Activated naive CD4-positive, alpha-beta T cell treated with anti-CD3 and anti-CD28 coated beads for 36 hours (primary cell): ENCODE measurements at regions of chr12 and their contacts with region 1.

Region 1: GRCh38 chr12:14365294-14366208 is at the start of gene ATF7IP:
- DNase-seq: peak; percentile 98
- H3K4me3 Mint-ChIP-seq: peak within 1 kb of the TSS; percentile 85
- H3K27ac Mint-ChIP-seq: peak within 1 kb of the TSS; percentile 98
- H3K4me1 Mint-ChIP-seq: peaks cover 38% of the 10 kb centered on the region
- H3K27me3 Mint-ChIP-seq: no peaks in the 10 kb centered on the region
- total RNA-seq, gene ATF7IP: 131 to 141 TPM

Region 2: DNA sequence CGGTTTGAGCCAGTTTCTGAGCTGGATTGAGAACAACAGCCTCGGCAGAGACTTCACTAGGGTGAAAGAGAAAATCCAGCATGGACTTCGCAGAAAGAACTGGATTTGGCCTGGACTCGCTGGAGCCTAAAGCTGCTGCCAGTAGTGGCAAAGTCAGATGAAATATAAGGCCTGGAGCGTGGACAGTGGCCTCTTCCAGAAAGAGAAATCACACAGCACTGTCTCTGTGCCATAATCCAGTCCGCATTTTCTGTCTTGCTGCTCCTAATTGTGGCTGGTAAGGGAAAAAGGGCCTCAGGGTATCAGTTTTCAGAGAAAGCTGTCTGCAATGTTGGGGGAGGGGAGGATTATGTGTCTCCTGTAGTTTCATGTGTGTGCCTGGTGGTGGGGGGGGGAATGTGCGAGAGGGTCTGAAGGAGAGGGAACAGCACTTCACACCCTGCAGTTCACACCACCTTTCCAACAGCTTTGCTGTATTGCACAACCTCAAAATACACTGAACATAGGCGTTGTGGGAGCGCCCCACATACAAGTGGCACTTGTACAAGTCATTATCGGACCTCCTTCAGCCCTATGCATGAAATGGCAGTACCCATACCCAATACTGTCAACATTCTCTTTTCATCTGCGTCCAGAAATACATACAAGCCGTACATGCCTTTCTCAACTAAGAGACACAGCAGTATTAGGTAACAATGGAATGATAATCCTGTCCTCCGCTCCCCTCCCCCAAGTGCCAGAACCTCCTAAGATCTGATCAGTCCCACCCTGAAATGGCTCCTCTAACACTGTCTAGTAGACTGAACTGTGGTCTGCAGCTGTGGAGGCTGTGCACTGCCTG is 107.6 kb before region 1 on chr12:
- CTCF ChIA-PET with region 1: interaction called, 8 read pairs
- intact Hi-C with region 1: loop called (anchors 1 kb)
- DNase-seq: peak; percentile 99
- H3K4me3 Mint-ChIP-seq: peak overlapping the region; percentile 73
- H3K27ac Mint-ChIP-seq: peak overlapping the region; percentile 98
- H3K4me1 Mint-ChIP-seq: peaks cover 53% of the 10 kb centered on the region
- H3K27me3 Mint-ChIP-seq: no peaks in the 10 kb centered on the region

Region 3: DNA sequence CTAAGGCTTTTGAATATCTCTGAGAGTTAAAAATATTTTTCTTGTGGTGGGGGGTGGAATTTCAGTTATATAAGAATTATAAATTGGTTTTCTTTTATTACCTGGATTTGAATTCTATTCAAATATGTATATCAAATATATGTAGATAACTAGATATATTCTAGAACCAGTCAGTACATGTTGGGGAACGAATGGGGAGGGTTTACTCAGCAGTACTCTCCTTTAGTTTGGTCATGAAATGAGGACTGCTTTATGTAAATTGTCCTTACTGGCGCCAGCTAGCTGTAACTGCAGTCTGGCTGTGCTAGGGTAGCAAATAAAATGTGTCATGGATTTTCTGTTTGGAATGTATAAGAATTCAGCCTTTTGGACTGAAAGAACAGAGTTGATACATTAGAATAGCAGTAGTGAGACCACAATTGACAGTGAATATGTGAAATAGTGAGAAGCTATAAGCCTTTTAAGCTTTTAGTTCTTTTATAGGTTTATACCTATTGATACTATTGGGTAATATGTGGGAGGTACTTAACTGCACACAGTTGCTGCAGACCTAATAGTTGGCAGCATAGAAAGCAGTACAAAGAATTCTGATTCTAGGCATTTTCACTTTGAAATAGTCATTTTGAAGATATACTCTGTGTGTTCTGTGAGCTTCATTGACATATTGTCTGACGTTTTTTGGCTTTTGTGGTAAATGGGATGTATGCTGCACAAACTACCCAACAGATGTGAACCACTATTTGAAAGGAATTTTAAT is 28.9 kb after region 1 on chr12:
- CTCF ChIA-PET with region 1: interaction called, 11 read pairs
- intact Hi-C with region 1: loop called (anchors 1 kb)
- DNase-seq: peak; percentile 62
- H3K4me3 Mint-ChIP-seq: peak overlapping the region; percentile 77
- H3K27ac Mint-ChIP-seq: peak overlapping the region; percentile 98
- H3K4me1 Mint-ChIP-seq: peaks cover 82% of the 10 kb centered on the region
- H3K27me3 Mint-ChIP-seq: no peaks in the 10 kb centered on the region

Region 4: DNA sequence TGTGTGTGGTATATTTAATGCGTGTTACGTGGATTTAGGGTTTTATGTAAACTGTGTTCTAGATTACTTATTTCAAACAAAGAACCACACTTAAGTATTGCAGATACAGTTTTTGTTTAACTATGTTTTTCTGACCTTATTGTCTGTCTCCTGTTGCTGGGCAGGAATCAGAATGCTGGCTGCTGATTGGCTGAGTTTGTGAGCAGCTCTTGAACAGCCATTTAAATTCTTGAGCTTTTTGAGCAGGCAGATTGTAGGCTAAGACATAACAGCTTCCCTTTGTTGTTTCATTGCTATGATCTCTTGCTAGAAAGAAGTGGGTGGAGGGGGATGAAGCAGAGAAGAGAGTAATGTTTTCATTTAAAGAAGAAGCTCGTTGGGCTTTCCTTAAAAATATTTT is 52.2 kb after region 1 on chr12:
- CTCF ChIA-PET with region 1: interaction called, 6 read pairs
- intact Hi-C with region 1: loop called (anchors 1 kb)
- DNase-seq: peak; percentile 89
- H3K4me3 Mint-ChIP-seq: peak overlapping the region; percentile 70
- H3K27ac Mint-ChIP-seq: peak overlapping the region; percentile 90
- H3K4me1 Mint-ChIP-seq: peaks cover 59% of the 10 kb centered on the region
- H3K27me3 Mint-ChIP-seq: no peaks in the 10 kb centered on the region

Region 5: DNA sequence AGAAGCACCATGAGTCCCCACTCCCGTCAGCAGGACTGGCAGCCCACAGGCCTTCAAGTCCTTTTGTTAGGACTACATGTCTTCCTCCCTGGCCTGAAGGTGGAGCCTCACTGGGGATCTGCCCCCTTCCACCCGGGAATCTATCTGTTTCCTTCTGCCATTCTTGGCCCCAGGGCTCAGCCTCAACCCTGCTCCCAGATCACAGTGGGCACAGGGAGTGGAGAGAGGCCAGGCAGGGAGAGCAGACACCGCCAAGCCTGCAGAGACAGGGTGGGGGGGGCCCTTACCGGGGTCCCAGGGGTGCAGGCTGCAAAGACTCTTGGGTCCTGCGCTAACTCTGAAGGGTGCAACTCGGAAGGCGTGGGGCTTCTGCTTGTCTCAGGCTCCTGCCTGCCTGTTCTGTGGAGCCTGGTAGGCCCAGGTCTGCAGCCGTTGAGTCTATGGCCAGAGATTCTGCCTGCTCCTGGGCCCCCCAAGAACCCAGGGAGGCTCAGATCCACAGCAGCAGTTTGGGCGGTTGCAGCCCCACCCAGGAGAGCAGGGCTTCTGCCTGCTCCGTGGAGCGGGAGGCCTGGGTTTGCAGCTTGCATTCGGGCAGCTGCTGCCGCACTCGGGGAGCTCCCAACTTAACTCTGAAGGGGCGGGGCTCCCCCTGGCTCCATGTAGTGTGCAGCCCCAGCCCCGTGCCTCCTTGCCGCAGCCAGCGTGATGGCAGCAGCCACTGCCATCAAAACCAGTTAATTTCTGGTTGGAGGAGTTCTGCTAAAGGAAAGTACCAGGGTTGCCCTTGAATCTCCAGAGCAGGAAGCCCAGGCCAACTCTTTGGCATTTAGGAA is 223.8 kb after region 1 on chr12:
- CTCF ChIA-PET with region 1: no interaction called
- intact Hi-C with region 1: no loop called
- DNase-seq: no peak
- H3K4me3 Mint-ChIP-seq: no peak overlapping the region
- H3K27ac Mint-ChIP-seq: no peak overlapping the region
- H3K4me1 Mint-ChIP-seq: no peaks in the 10 kb centered on the region
- H3K27me3 Mint-ChIP-seq: no peaks in the 10 kb centered on the region

Region 6: DNA sequence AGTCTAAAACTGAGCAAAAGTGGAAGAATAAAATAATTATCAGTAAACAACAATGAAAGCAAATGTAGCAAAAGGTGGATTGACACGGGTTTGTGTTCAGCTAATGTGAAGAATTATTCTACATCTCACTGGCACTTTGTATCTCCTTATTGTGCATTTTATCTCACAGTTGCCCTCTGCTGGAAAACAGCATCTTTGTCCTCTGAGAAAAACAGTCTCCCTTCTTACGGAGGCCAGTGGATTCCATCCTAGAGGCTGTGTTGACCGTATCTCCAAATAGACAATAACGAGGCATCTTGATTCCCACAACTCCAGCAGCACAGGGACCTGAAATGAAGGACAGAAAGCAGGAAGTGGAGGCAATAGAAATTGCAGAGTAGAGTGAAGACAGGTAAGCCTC is 253.4 kb after region 1 on chr12:
- CTCF ChIA-PET with region 1: no interaction called
- intact Hi-C with region 1: loop called (anchors 10 kb)
- DNase-seq: peak; percentile 25
- H3K4me3 Mint-ChIP-seq: no peak overlapping the region
- H3K27ac Mint-ChIP-seq: no peak overlapping the region
- H3K4me1 Mint-ChIP-seq: peaks cover 2% of the 10 kb centered on the region
- H3K27me3 Mint-ChIP-seq: peaks cover 8% of the 10 kb centered on the region

Region 7: DNA sequence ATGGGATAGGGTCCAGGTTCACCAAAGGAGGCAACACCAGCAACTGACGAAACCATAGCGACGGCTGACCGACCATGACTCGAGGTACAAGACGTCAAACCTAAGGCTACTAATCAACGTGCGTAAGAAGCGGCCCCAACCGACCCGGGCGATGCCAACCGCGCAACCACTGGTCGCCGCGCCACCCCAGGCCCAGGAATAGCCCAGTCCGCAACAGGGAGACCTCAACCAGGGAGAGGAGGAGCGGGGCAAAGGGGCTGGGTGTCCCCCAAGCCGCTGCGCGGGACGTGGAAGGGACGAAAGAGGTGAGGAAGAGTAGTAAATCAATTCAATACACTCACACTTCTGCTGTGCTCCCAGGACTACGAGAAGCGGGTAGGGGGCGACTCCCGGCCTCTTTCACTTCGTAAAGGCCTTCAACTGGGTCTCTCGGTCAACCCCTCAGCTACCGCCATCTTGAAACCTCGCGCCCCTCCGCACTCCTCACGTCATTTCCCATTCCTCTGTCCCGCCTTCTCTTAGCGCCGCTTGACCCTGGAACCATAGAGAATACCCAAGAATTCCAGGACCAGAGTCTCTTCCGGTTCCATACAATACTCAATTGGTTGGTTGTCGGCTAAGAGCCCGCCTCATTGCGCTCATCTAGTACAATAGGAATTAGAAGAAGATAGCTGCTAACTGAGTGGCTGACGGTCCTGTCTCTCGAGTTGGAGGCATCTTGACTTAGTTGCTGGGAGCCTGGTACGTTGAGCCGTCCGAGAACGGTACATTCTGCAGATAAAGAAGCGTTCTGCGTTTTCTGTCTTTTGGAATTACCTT is 437.7 kb after region 1 on chr12 and contains the starts of genes C12orf60 and WBP11:
- CTCF ChIA-PET with region 1: no interaction called
- intact Hi-C with region 1: loop called (anchors 1 kb)
- DNase-seq: peak; percentile 94
- H3K4me3 Mint-ChIP-seq: no peak within 1 kb of the TSS
- H3K27ac Mint-ChIP-seq: no peak within 1 kb of the TSS
- H3K4me1 Mint-ChIP-seq: peaks cover 34% of the 10 kb centered on the region
- H3K27me3 Mint-ChIP-seq: no peaks in the 10 kb centered on the region
- total RNA-seq, gene C12orf60: 2.0 to 3.1 TPM
- total RNA-seq, gene WBP11: 105 to 115 TPM